H1 (cell line): ENCODE measurements at regions of chr3 and their contacts with region 1.

Region 1: DNA sequence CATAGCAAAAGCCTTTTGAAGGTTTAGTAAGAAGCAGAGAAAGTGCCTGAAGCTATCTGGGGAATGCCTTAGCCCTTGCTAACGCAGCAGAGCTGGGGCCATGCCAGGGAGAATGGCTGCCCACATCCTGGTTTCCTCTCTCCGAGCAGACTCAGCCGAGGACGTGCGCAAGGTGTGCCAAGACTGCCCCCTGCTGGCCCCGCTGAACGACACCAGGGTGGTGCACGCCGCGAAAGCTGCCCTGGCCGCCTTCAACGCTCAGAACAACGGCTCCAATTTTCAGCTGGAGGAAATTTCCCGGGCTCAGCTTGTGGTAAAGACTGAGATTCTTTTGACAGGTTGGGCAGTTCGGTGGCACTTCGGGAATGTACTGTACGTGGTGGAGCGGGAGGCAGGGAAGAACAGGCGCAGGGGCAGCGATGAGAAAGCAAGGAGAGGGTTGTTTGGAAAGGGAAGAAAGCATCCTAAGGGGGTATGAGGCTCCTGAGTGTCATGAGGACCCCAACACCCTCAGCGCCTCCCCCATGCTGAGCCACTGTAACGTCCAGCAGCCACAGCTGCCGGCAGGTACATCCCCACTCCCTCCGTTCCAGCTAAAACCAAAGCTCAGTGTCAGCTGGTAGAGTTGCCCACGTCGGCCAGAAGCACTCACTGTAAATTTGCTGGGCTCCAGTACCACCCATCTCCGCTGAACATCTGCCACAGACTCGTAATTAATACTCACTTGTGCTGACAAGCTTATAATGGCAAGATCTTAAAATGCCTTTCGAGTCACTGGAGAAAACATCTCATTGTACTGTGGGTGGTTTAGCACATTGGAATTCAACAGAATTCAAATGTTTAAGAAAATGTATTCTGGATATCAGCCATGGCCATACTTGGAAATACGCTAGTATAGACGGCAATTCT is 4.4 kb downstream of the AHSG start:
- DNase-seq: peak; percentile 75 to 87
- H3K4me3 ChIP-seq: peak overlapping the region in 1 of 4 experiments; percentile 17; a peak in 1 of 8 replicates
- H3K27ac ChIP-seq: no peak overlapping the region
- H3K4me1 ChIP-seq: peaks cover 0 to 7% (median 6%) of the 10 kb centered on the region in 4 experiments; a peak in 6 of 7 replicates
- H3K27me3 ChIP-seq: peaks cover 0 to 2% (median 0%) of the 10 kb centered on the region in 4 experiments; a peak in 1 of 7 replicates
- CTCF ChIP-seq: peak; percentile 85 to 98 (median 96)
- EP300 ChIP-seq: no peak
- POLR2A ChIP-seq: no peak
- RAD21 ChIP-seq: peak; percentile 74 to 84

Region 2: GRCh38 chr3:186635532-186635931 is 18.2 kb after region 1 on chr3:
- CTCF ChIA-PET with region 1: interaction called, 50 read pairs
- POLR2A ChIA-PET with region 1: interaction called, 3 read pairs
- DNase-seq: no peak
- H3K4me3 ChIP-seq: no peak overlapping the region
- H3K27ac ChIP-seq: no peak overlapping the region
- H3K4me1 ChIP-seq: peaks cover 0 to 3% (median 2%) of the 10 kb centered on the region in 4 experiments; a peak in 3 of 7 replicates
- H3K27me3 ChIP-seq: no peaks in the 10 kb centered on the region
- CTCF ChIP-seq: no peak
- EP300 ChIP-seq: no peak
- POLR2A ChIP-seq: no peak
- RAD21 ChIP-seq: no peak

Region 3: DNA sequence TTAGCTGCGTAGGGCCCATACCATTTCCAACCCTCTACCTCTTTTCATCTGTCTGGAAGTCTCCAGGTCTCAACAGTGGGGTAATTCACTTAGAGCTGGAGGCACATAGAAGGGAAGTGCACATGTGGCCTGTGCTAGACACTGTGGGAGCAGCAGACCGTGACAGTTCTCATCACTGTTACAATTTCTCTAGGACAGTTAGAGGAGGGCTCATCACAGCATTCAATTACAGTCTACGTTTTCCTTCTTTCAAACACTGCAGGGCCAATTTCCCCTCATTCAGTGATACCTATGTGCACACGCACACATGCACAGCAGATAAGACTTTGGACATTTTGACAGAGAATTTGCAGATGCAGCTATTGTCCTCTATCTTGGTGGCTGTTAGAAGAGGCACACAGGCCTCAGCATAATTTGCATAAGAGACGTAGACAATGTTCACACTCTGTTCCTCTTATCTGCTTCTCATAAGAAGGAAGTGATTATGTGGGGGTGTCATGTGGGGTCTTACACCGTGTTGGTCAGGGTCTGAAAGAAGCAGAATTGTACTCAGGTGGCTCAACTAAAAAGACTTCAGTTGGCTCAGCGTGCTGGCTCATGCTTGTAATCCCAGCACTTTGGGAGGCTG is 35.9 kb after region 1 on chr3:
- CTCF ChIA-PET with region 1: interaction called, 34 read pairs
- POLR2A ChIA-PET with region 1: interaction called, 3 read pairs
- DNase-seq: no peak
- H3K4me3 ChIP-seq: no peak overlapping the region
- H3K27ac ChIP-seq: no peak overlapping the region
- H3K4me1 ChIP-seq: peaks cover 0 to 5% (median 3%) of the 10 kb centered on the region in 4 experiments; a peak in 3 of 7 replicates
- H3K27me3 ChIP-seq: no peaks in the 10 kb centered on the region
- CTCF ChIP-seq: no peak
- EP300 ChIP-seq: no peak
- POLR2A ChIP-seq: no peak
- RAD21 ChIP-seq: no peak

Region 4: GRCh38 chr3:186722456-186722855 is 105.2 kb after region 1 on chr3:
- CTCF ChIA-PET with region 1: interaction called, 17 read pairs
- POLR2A ChIA-PET with region 1: no interaction called
- DNase-seq: peak; percentile 17 to 59
- H3K4me3 ChIP-seq: no peak overlapping the region
- H3K27ac ChIP-seq: no peak overlapping the region
- H3K4me1 ChIP-seq: no peaks in the 10 kb centered on the region; a peak in 2 of 7 replicates
- H3K27me3 ChIP-seq: no peaks in the 10 kb centered on the region
- CTCF ChIP-seq: peak in 2 of 3 experiments; percentile 55 to 60; a peak in 3 of 4 replicates
- EP300 ChIP-seq: no peak
- POLR2A ChIP-seq: no peak
- RAD21 ChIP-seq: peak; percentile 43 to 68

Region 5: DNA sequence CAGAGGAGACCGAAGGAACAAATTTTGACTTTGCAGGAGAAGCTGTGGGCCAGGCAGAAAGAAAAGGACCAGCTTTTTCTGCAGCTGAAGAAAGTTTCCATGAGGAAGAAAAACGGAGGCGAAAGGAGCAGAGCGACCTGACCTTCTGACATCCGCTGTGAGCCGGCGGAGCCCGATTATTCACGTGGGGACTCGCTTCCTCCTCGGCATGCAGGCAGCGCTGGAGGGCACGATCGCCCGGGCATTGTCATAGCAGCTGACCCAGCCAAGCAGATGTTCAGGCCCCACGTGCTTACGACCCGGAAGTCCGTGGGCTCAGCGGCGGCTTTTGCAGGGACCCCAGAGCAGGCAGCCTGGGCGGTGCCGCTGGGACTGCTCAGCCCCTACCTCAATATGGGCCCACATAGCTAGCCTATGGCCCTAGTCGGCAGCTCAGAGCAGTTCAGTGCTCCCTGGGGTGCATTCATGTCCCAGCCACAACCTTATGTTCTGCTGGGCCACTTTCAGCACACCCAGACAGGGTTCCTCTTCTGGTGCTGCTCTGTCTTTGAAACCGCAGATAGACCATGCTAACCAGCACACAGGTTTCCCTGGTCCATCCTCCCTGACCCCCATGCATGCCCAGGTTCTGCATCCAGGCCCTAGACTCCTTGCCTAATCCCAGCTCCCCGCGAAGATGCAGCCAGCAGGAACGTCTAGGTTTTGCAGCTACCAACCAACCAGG is 155.6 kb after region 1 on chr3:
- CTCF ChIA-PET with region 1: interaction called, 81 read pairs
- POLR2A ChIA-PET with region 1: no interaction called
- DNase-seq: no peak
- H3K4me3 ChIP-seq: no peak overlapping the region; a peak in 1 of 8 replicates
- H3K27ac ChIP-seq: no peak overlapping the region
- H3K4me1 ChIP-seq: peaks cover 0 to 19% (median 5%) of the 10 kb centered on the region in 4 experiments; a peak in 6 of 7 replicates
- H3K27me3 ChIP-seq: peaks cover 0 to 3% (median 0%) of the 10 kb centered on the region in 4 experiments; a peak in 2 of 7 replicates
- CTCF ChIP-seq: no peak
- EP300 ChIP-seq: no peak
- POLR2A ChIP-seq: no peak
- RAD21 ChIP-seq: no peak